ENCODE measurements at regions of chr6 and their contacts with region 1.

Region 1: DNA sequence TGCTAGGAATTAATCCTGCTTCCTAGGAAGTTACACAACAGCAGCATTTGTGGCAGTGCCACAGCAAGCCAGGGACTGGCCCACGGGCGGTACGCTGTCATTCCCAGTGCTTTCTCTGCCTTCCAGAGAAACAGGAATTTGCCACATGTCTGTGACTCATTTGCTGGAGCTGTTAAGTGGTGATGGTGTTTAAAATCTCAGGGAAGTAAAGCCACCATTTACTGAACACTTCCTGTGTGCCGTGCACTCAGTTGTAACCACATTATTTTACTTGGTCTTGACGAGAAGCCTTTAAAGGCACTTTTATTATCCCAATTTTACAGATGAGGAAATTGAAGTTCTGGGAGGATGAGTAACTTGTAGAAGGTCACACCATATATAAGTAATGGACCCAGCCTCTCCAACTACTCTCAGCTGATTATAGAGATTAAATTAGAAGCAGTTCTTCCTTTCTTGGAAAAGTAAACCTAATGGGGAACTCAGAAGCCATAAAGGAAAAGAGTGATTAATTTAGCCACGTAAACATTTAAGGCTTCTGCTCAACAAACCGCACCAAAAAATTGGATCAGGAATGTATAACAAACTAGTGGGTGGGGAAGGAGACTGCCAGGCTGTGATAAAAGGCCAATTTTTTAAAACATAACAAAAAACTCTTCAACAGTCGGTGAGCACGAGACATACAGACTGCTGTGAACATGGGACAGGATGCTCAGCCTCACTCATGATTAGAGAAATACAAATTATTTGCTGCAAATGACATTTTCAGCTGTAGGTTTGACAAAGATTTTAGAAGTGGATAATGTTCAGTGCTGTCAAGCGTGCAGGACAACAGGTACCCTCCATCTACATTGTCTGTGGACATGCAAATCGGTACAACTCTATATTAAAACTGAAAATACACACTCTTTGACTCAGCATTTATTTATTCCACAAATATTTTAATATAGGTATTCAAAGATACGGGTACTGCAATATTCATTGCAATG is 311.2 kb downstream of the NRN1 start:
- DNase-seq: no peak
- ATAC-seq: no peak
- H3K4me3 ChIP-seq: no peak overlapping the region
- H3K27ac ChIP-seq: no peak overlapping the region
- H3K4me1 ChIP-seq: peaks cover 11% of the 10 kb centered on the region
- H3K27me3 ChIP-seq: no peaks in the 10 kb centered on the region
- CTCF ChIP-seq: no peak
- EP300 ChIP-seq: no peak
- POLR2A ChIP-seq: no peak
- RAD21 ChIP-seq: no peak

Region 2: GRCh38 chr6:5723841-5724691 is 28.5 kb after region 1 on chr6:
- CTCF ChIA-PET with region 1: no interaction called
- POLR2A ChIA-PET with region 1: no interaction called
- RAD21 ChIA-PET with region 1: no interaction called
- SMC1A ChIA-PET with region 1: no interaction called
- in situ Hi-C with region 1: no loop called
- intact Hi-C with region 1: loop called (anchors 1 kb)
- DNase-seq: peak; percentile 60
- ATAC-seq: peak; percentile 98
- H3K4me3 ChIP-seq: peak overlapping the region; percentile 71
- H3K27ac ChIP-seq: peak overlapping the region; percentile 84
- H3K4me1 ChIP-seq: peaks cover 18% of the 10 kb centered on the region
- H3K27me3 ChIP-seq: no peaks in the 10 kb centered on the region
- CTCF ChIP-seq: no peak
- EP300 ChIP-seq: peak; percentile 54 to 95
- POLR2A ChIP-seq: peak; percentile 68
- RAD21 ChIP-seq: no peak